MCF 10A (cell line): ENCODE measurements at regions of chr2 and their contacts with region 1.

Region 1: GRCh38 chr2:180980106-180980942 is at the start of gene UBE2E3:
- DNase-seq: peak; percentile 78
- H3K4me3 Mint-ChIP-seq: peak within 1 kb of the TSS; percentile 93
- H3K27ac Mint-ChIP-seq: peak within 1 kb of the TSS; percentile 98
- H3K4me1 Mint-ChIP-seq: peaks cover 37% of the 10 kb centered on the region
- H3K27me3 Mint-ChIP-seq: no peaks in the 10 kb centered on the region
- CTCF ChIP-seq: peak; percentile 71
- total RNA-seq, gene UBE2E3: 69.0 and 69.3 TPM in 2 replicates

Region 2: DNA sequence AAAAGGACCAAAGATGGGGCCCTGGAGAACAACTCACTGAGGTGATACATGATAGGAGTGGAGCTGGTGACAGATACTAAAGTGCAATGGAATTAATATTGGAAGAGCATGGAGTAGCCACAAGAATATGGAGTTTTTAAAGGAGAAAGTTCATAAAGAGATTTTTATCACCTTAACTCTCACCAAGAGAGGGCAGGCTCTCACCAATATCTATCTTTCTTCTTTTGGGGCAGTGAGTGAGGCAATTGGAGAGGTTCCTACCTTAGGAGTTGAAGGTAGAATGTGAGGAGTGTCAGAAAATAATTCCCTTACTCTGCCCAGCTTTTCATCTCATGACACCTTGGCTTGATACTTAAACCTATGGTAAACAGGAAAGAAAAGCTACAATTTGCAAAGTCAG is 739.5 kb before region 1 on chr2:
- CTCF ChIA-PET with region 1: interaction called, 16 read pairs
- POLR2A ChIA-PET with region 1: interaction called, 4 read pairs
- intact Hi-C with region 1: loop called (anchors 2 kb)
- DNase-seq: peak; percentile 51
- H3K4me3 Mint-ChIP-seq: no peak overlapping the region
- H3K27ac Mint-ChIP-seq: no peak overlapping the region
- H3K4me1 Mint-ChIP-seq: peaks cover 6% of the 10 kb centered on the region
- H3K27me3 Mint-ChIP-seq: no peaks in the 10 kb centered on the region
- CTCF ChIP-seq: peak; percentile 49

Region 3: DNA sequence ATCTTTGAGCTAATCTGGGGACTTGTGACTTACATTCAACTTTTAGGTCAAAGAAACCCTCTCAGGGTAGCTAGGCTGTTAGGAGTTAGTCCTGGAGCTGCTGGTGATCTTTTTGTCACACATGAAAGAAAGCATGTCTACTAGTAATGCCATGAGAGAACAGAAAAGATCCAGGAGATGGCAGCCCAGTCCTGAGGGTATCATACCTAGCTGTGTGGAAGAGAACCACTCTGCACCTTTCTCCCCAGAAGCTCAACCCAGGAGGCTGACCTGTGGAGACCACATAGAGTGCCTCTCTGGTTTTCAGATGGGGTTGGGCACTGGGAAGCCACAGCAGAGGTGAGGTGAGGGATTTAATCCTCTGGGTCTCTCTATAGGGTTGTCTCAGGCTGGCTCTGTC is 460.1 kb before region 1 on chr2:
- CTCF ChIA-PET with region 1: interaction called, 9 read pairs
- POLR2A ChIA-PET with region 1: interaction called, 7 read pairs
- intact Hi-C with region 1: loop called (anchors 1 kb)
- DNase-seq: peak; percentile 23
- H3K4me3 Mint-ChIP-seq: no peak overlapping the region
- H3K27ac Mint-ChIP-seq: peak overlapping the region; percentile 57
- H3K4me1 Mint-ChIP-seq: peaks cover 29% of the 10 kb centered on the region
- H3K27me3 Mint-ChIP-seq: no peaks in the 10 kb centered on the region
- CTCF ChIP-seq: no peak

Region 4: DNA sequence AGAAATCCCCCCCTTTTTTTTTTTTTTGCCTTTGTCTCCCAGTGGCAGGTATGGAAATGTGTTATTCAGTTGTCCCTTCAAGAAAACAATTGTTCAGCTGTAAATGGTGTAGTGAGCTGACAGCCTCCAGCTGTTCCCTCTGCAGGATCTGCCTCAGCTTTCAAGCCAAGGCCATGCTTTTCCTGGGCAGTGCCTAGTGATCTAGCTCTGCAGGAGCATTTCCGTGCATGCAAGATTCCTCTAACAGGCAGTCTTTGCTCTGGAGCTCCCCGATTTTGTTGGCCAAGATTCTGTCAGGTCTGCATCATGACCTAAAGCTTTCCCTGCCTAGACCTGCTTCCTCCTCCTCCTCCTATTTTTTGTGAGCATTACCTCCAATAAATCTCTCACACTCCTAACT is 300.6 kb before region 1 on chr2:
- CTCF ChIA-PET with region 1: interaction called, 13 read pairs
- POLR2A ChIA-PET with region 1: interaction called, 16 read pairs
- intact Hi-C with region 1: no loop called
- DNase-seq: no peak
- H3K4me3 Mint-ChIP-seq: no peak overlapping the region
- H3K27ac Mint-ChIP-seq: no peak overlapping the region
- H3K4me1 Mint-ChIP-seq: peaks cover 23% of the 10 kb centered on the region
- H3K27me3 Mint-ChIP-seq: no peaks in the 10 kb centered on the region
- CTCF ChIP-seq: no peak

Region 5: GRCh38 chr2:180742809-180743208 is 237.5 kb before region 1 on chr2:
- CTCF ChIA-PET with region 1: interaction called, 3 read pairs
- POLR2A ChIA-PET with region 1: interaction called, 4 read pairs
- intact Hi-C with region 1: loop called (anchors 10 kb)
- DNase-seq: peak; percentile 76
- H3K4me3 Mint-ChIP-seq: no peak overlapping the region
- H3K27ac Mint-ChIP-seq: peak overlapping the region; percentile 83
- H3K4me1 Mint-ChIP-seq: peaks cover 23% of the 10 kb centered on the region
- H3K27me3 Mint-ChIP-seq: no peaks in the 10 kb centered on the region
- CTCF ChIP-seq: no peak

Region 6: DNA sequence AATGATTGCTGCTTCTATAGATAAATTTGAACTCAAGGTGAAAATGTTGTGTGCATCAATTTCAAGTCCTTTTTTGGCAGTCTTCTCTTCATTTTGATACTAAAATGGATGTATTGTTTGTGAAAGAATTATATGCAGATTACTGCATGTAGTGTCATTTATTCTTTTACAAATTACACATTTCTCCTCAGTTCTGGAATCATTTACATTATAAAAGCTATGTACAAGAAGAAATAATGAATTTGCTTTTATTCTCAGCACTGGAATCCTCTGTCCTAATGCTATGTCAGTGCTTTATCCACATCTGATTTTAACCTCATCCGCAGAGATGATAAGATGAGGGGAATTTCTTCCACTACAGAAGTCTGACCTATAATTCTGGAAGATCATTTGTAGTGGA is 220.7 kb before region 1 on chr2:
- CTCF ChIA-PET with region 1: no interaction called
- POLR2A ChIA-PET with region 1: no interaction called
- intact Hi-C with region 1: no loop called
- DNase-seq: no peak
- H3K4me3 Mint-ChIP-seq: no peak overlapping the region
- H3K27ac Mint-ChIP-seq: no peak overlapping the region
- H3K4me1 Mint-ChIP-seq: peaks cover 8% of the 10 kb centered on the region
- H3K27me3 Mint-ChIP-seq: no peaks in the 10 kb centered on the region
- CTCF ChIP-seq: no peak

Region 7: DNA sequence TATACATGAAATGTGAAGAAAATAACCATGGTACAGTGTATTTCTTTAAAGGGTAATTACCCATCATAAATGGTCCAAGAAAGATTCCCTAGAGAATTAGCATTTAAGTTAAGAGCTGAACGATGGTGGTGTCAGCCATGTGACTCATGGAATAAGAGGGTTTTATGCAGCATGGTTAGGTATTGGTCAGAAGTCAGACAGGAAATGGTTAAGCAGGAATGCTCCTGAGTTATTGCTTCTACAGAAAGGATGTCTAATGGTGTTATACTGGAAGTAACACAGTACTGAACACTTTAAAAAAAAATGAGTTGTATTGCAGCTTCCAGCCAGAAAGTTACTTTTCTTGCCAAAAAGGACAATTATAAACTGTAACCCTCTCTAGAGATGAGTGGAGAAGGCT is 72.6 kb before region 1 on chr2:
- CTCF ChIA-PET with region 1: no interaction called
- POLR2A ChIA-PET with region 1: no interaction called
- intact Hi-C with region 1: no loop called
- DNase-seq: no peak
- H3K4me3 Mint-ChIP-seq: no peak overlapping the region
- H3K27ac Mint-ChIP-seq: no peak overlapping the region
- H3K4me1 Mint-ChIP-seq: no peaks in the 10 kb centered on the region
- H3K27me3 Mint-ChIP-seq: no peaks in the 10 kb centered on the region
- CTCF ChIP-seq: no peak

Region 8: GRCh38 chr2:181070119-181070835 is 90.0 kb after region 1 on chr2:
- CTCF ChIA-PET with region 1: interaction called, 3 read pairs
- POLR2A ChIA-PET with region 1: interaction called, 3 read pairs
- intact Hi-C with region 1: loop called (anchors 5 kb)
- DNase-seq: peak; percentile 73
- H3K4me3 Mint-ChIP-seq: no peak overlapping the region
- H3K27ac Mint-ChIP-seq: no peak overlapping the region
- H3K4me1 Mint-ChIP-seq: peaks cover 24% of the 10 kb centered on the region
- H3K27me3 Mint-ChIP-seq: no peaks in the 10 kb centered on the region
- CTCF ChIP-seq: no peak

Region 9: DNA sequence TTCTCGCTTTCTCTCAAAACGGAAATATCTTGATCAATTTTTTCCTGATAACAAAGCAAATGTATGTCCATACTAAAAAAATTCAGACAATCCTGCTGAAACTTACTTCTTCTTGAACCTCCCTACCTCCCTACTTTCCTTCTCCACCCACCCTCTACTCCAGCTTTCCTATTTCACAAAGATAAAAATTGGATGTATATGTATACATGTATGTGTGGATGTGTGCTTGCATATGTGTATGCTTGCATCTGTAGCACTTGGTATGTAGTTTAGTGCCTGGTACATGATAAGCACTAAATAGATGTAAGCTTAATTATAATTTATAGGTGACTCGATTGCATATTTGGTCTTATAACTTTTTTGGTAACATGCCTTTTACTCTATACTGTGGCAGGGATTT is 309.4 kb after region 1 on chr2:
- CTCF ChIA-PET with region 1: no interaction called
- POLR2A ChIA-PET with region 1: no interaction called
- intact Hi-C with region 1: no loop called
- DNase-seq: no peak
- H3K4me3 Mint-ChIP-seq: no peak overlapping the region
- H3K27ac Mint-ChIP-seq: no peak overlapping the region
- H3K4me1 Mint-ChIP-seq: no peaks in the 10 kb centered on the region
- H3K27me3 Mint-ChIP-seq: no peaks in the 10 kb centered on the region
- CTCF ChIP-seq: no peak